Psoas muscle (tissue), 8 donors: ENCODE measurements at regions of chr17 and their contacts with region 1.

Region 1: GRCh38 chr17:41822216-41823140 is 9.7 kb downstream of the FKBP10 start:
- DNase-seq: no peak
- ATAC-seq: no peak
- H3K4me3 ChIP-seq: no peak overlapping the region
- H3K27ac ChIP-seq: no peak overlapping the region
- H3K4me1 ChIP-seq: no peaks in the 10 kb centered on the region
- H3K27me3 ChIP-seq: no peaks in the 10 kb centered on the region
- CTCF ChIP-seq: no peak

Region 2: DNA sequence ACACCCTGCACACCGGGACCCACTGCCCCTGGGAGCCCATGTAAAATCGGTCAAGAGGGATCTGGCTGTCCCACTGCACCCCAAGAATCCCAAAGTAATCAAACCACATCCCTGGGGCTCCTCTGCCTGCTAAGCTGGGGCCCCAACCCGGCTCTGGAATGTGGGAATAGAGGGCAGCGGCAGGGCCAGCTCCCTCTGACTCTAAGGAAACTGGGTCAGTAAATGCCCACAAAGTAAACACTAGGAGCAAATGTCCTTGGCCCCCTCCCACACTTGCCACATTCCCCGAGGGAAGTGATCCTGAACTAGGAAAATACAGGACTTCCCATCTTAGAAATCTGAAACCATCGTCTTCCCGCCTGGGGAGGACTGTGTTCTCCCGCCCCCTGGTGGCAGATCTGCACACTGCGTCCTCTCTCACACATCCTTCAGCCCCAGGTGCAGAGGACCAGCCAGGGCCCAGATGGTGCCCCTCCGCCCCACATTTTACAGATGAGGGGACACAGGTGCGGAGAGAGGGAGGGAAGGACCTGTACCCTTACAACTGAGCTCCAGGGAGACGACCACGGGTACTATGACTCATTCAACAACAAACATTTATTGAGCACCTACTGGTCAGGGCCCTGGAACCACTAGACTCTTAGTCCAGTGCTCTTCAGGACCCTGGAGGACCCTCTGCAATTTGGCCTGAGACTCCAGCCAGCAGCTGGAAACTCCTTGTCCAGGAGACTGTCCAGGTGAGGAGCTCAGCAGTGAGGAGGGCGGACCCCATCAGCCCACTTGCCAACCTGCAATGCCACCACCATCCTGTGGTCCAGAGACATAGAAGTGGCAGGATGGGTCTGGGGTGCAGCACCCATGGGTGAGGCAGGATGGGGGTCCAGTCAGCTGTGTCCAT is 20.9 kb before region 1 on chr17:
- intact Hi-C with region 1: loop called in 1 of 2 experiments (anchors 1 kb)
- DNase-seq: peak; percentile 79 to 91
- ATAC-seq: peak; percentile 82 to 95 (median 90)
- H3K4me3 ChIP-seq: peak overlapping the region; percentile 12
- H3K27ac ChIP-seq: no peak overlapping the region
- H3K4me1 ChIP-seq: peaks cover 6% of the 10 kb centered on the region
- H3K27me3 ChIP-seq: no peaks in the 10 kb centered on the region
- CTCF ChIP-seq: peak; percentile 98

Region 3: DNA sequence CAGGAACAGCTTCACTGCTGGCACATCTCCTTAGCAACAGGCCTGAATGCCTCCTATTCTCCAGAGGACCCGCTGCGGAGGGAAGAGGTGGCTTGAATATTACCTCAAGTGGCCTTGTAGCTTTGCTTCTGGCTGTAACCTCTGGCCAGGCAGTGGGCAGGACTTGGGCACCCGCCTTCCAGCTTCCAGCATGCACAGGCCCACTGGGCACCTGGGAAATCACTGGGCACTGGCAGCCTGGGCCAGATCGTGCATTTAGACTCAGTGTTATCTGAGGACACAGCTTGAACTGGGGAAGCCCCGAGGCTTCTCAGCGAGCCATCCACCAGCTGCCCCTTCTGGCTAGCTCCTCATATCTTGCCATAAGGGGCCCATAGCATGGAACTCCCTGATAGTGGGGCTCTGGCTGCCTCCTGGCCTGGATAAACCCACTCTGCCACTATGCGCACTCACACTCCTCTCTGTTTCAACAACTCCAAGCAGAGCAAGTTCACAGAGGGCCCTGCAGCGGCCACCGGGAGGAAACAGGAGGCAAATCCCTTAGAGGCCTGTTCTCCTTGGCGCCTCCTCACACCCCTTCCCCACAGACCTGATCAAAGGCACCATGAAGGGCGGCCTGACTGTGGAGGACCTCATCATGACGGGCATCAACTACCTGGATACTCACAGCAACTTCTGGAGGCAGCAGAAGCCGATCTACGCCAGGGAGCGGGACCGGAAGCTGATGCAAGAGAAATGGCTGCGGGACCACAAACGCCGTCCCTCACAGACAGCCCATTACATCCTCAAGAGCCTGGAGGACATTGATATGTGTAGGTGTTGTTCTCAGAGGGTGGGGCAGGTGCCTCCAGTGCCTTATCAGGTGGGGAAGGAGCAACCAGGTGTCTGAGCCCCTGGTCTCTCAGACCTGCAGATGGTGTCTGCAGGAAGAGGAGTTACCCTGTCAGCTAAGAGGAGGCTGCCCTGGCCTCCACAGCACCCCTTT is 115.8 kb after region 1 on chr17:
- intact Hi-C with region 1: no loop called
- DNase-seq: peak in 1 of 2 donors; percentile 62
- ATAC-seq: peak; percentile 59 to 93 (median 90)
- H3K4me3 ChIP-seq: no peak overlapping the region
- H3K27ac ChIP-seq: peak overlapping the region; percentile 17
- H3K4me1 ChIP-seq: peaks cover 12% of the 10 kb centered on the region
- H3K27me3 ChIP-seq: no peaks in the 10 kb centered on the region
- CTCF ChIP-seq: no peak